Activated CD4-positive, alpha-beta memory T cell treated with anti-CD3 and anti-CD28 coated beads for 36 hours (primary cell): ENCODE measurements at regions of chr7 and their contacts with region 1.

Region 1: DNA sequence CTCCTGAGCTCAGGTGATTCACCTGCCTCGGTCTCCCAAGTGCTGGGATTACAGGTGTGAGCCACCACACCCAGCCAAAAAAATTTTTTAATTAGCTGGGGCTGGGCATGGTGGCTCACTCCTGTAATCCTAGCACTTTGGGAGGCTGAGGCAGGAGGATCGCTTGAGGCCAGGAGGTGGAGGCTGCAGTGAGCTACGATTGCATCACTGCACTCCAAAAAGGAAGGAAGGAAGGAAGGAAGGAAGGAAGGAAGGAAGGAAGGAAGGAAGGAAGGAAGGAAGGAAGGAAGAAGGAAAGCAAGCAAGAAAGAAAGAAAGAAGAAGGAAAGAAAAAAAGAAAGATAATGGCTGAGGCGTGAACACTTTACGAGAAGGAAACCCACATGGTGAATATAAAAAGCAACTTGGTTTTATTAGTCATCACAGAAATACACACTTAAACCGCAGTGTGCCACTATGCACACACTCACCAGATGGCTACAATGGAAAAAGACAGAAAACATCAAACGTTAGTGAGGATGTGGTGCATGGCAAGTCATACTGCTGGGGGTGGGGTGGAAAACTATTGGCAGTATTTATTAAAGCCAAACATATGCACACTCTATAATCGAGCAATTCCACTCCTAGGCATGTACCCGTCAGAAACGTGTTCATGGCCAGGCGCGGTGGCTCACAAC is 4.4 kb upstream of the CCL26 start:
- DNase-seq: peak; percentile 78
- H3K4me3 Mint-ChIP-seq: peak overlapping the region; percentile 49
- H3K27ac Mint-ChIP-seq: peak overlapping the region; percentile 80
- H3K4me1 Mint-ChIP-seq: peaks cover 50% of the 10 kb centered on the region
- H3K27me3 Mint-ChIP-seq: peaks cover 12% of the 10 kb centered on the region

Region 2: GRCh38 chr7:75531359-75531821 is 245.0 kb before region 1 on chr7:
- CTCF ChIA-PET with region 1: no interaction called
- POLR2A ChIA-PET with region 1: no interaction called
- intact Hi-C with region 1: loop called (anchors 10 kb)
- DNase-seq: no peak
- H3K4me3 Mint-ChIP-seq: no peak overlapping the region
- H3K27ac Mint-ChIP-seq: no peak overlapping the region
- H3K4me1 Mint-ChIP-seq: peaks cover 18% of the 10 kb centered on the region
- H3K27me3 Mint-ChIP-seq: no peaks in the 10 kb centered on the region

Region 3: DNA sequence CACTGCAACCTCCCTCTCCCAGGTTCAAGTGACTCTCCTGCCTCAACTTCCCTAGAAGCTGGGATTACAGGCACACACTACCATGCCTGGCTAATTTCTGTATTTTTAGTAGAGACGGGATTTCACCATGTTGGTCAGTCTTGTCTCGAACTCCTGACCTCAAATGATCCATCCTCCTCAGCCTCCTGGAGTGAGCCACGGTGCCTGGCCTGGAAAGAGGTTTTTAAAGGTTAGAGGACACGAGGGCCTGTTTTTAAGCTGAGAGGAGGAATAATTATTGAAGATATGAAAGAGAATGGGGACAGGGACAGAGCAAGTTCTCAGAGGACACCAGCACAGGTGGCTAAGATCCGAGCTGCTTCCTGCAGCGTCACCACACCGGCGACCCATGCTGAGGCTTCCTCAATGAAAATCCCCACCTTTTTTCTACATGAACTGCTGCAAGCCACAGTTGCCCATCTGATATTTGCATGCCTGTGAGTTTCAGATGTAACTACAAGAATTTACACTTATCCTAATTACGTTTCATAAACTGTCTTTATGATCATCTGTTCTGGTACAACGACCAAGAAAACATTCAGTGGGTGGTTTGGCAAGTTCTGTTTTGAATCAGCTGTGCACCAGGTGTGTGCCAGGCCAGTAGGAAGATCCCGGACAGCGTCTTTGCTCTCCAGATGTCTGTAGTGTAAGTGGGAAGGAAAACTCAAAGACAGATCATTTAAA is 113.7 kb before region 1 on chr7:
- CTCF ChIA-PET with region 1: no interaction called
- POLR2A ChIA-PET with region 1: no interaction called
- intact Hi-C with region 1: loop called (anchors 5 kb)
- DNase-seq: peak; percentile 24
- H3K4me3 Mint-ChIP-seq: no peak overlapping the region
- H3K27ac Mint-ChIP-seq: peak overlapping the region; percentile 2
- H3K4me1 Mint-ChIP-seq: peaks cover 13% of the 10 kb centered on the region
- H3K27me3 Mint-ChIP-seq: no peaks in the 10 kb centered on the region

Region 4: DNA sequence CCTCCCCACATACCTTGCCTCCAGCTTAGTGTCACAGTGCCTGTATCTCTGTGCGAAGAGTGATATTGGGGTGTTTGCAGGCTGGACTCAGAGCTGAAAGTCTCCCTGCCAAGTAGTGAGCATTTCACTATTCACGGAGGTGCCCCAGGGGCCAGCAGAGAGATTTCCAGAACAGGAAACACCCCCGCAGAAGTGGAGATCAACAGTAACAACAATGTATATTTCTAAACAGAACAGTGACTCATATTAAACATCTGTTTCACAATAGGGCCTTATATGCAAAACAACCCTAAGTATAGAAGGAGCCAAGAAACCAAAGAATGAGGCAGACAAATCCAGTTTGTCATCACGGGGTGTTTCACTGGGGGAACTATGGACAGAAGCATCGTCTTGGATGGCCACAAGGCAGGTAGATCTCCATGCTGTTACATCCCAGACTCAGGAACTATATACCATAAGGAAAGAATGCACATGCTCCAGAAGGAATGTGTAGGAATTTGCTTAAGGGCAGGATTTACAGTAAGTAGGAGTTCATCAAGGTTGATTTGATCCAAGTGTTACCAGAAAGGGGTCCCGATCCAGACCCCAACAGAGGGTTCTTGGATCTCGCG is 66.5 kb after region 1 on chr7:
- CTCF ChIA-PET with region 1: no interaction called
- POLR2A ChIA-PET with region 1: no interaction called
- intact Hi-C with region 1: loop called (anchors 2 kb)
- DNase-seq: peak; percentile 80
- H3K4me3 Mint-ChIP-seq: peak overlapping the region; percentile 41
- H3K27ac Mint-ChIP-seq: peak overlapping the region; percentile 81
- H3K4me1 Mint-ChIP-seq: peaks cover 15% of the 10 kb centered on the region
- H3K27me3 Mint-ChIP-seq: no peaks in the 10 kb centered on the region

Region 5: DNA sequence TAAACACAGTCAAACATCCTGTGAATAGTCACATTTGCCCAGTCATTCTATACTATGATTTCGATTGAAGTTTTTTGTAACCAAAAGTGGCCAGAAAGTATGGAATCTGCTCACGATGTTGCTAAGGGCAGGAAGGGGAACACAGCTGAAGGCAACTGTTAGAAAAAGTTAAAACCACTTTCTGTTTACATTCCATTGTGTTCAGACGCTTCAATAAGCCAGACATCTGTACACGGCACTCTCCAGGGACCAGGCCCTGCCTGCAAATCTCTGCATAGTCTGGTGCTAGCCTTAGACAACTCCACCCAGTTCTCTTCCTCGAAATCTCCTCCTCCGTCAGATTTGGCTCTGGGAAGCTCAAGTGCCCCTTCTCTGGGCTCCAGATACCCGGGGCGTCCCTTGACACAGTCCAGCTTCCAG is 235.0 kb after region 1 on chr7:
- CTCF ChIA-PET with region 1: no interaction called
- POLR2A ChIA-PET with region 1: no interaction called
- intact Hi-C with region 1: loop called (anchors 5 kb)
- DNase-seq: no peak
- H3K4me3 Mint-ChIP-seq: no peak overlapping the region
- H3K27ac Mint-ChIP-seq: no peak overlapping the region
- H3K4me1 Mint-ChIP-seq: peaks cover 34% of the 10 kb centered on the region
- H3K27me3 Mint-ChIP-seq: no peaks in the 10 kb centered on the region